ENCODE measurements at regions of chr1 and their contacts with region 1.

Region 1: GRCh38 chr1:14113841-14114567 is 414.0 kb downstream of the PRDM2 start:
- DNase-seq: peak; percentile 80
- ATAC-seq: peak; percentile 97
- H3K4me3 Mint-ChIP-seq: no peak overlapping the region
- H3K27ac Mint-ChIP-seq: no peak overlapping the region
- H3K4me1 Mint-ChIP-seq: peaks cover 15% of the 10 kb centered on the region
- H3K27me3 Mint-ChIP-seq: no peaks in the 10 kb centered on the region; the same call in 1 of the 2 replicates
- CTCF ChIP-seq: peak; percentile 41; the same call in 1 of the 2 replicates

Region 2: GRCh38 chr1:13965770-13966398 is 148.1 kb before region 1 on chr1:
- CTCF ChIA-PET with region 1: interaction called, 28 read pairs
- POLR2A ChIA-PET with region 1: no interaction called
- DNase-seq: peak; percentile 74
- ATAC-seq: peak; percentile 99
- H3K4me3 Mint-ChIP-seq: no peak overlapping the region
- H3K27ac Mint-ChIP-seq: no peak overlapping the region
- H3K4me1 Mint-ChIP-seq: no peaks in the 10 kb centered on the region; the same call in 1 of the 2 replicates
- H3K27me3 Mint-ChIP-seq: peaks cover 33% of the 10 kb centered on the region
- CTCF ChIP-seq: peak; percentile 28; the same call in 1 of the 2 replicates

Region 3: GRCh38 chr1:14366091-14367018 is 252.4 kb after region 1 on chr1:
- CTCF ChIA-PET with region 1: interaction called, 24 read pairs
- POLR2A ChIA-PET with region 1: no interaction called
- DNase-seq: peak; percentile 27
- ATAC-seq: peak; percentile 81
- H3K4me3 Mint-ChIP-seq: no peak overlapping the region
- H3K27ac Mint-ChIP-seq: no peak overlapping the region
- H3K4me1 Mint-ChIP-seq: peaks cover 39% of the 10 kb centered on the region
- H3K27me3 Mint-ChIP-seq: peaks cover 19% of the 10 kb centered on the region
- CTCF ChIP-seq: no peak

Region 4: GRCh38 chr1:14424325-14425002 is 310.5 kb after region 1 on chr1:
- CTCF ChIA-PET with region 1: interaction called, 10 read pairs
- POLR2A ChIA-PET with region 1: no interaction called
- DNase-seq: no peak
- ATAC-seq: no peak
- H3K4me3 Mint-ChIP-seq: no peak overlapping the region
- H3K27ac Mint-ChIP-seq: no peak overlapping the region
- H3K4me1 Mint-ChIP-seq: no peaks in the 10 kb centered on the region
- H3K27me3 Mint-ChIP-seq: peaks cover 17% of the 10 kb centered on the region
- CTCF ChIP-seq: no peak

Region 5: GRCh38 chr1:14441302-14441741 is 327.3 kb after region 1 on chr1:
- CTCF ChIA-PET with region 1: interaction called, 17 read pairs
- POLR2A ChIA-PET with region 1: no interaction called
- DNase-seq: no peak
- ATAC-seq: no peak
- H3K4me3 Mint-ChIP-seq: no peak overlapping the region
- H3K27ac Mint-ChIP-seq: no peak overlapping the region
- H3K4me1 Mint-ChIP-seq: peaks cover 2% of the 10 kb centered on the region; the same call in 1 of the 2 replicates
- H3K27me3 Mint-ChIP-seq: peaks cover 9% of the 10 kb centered on the region
- CTCF ChIP-seq: no peak